Activated naive CD4-positive, alpha-beta T cell treated with anti-CD3 and anti-CD28 coated beads for 36 hours (primary cell): ENCODE measurements at regions of chr11 and their contacts with region 1.

Region 1: GRCh38 chr11:4187055-4187988 is 92.7 kb downstream of the RRM1 start:
- DNase-seq: peak; percentile 89
- H3K4me3 Mint-ChIP-seq: peak overlapping the region; percentile 73
- H3K27ac Mint-ChIP-seq: no peak overlapping the region
- H3K4me1 Mint-ChIP-seq: peaks cover 2% of the 10 kb centered on the region
- H3K27me3 Mint-ChIP-seq: peaks cover 9% of the 10 kb centered on the region

Region 2: DNA sequence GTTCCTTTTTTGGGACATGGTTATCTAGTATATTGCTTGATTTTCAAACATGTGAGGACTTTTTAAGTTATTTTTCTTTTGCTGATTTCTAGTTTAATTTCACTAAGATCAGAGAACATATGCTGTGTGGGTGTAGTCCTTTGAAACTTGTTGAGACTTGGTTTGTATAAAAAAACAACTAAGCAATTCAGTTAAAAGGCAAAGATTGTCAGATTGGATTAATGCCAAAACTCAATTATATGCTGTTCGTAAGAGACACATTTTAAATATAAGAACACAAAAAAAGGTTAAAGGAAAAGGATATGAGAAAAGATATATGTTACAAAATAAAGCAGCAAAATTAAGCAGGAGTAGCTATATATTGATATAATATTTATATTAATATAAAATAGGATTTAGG is 110.5 kb before region 1 on chr11:
- CTCF ChIA-PET with region 1: no interaction called
- intact Hi-C with region 1: no loop called
- DNase-seq: no peak
- H3K4me3 Mint-ChIP-seq: no peak overlapping the region
- H3K27ac Mint-ChIP-seq: no peak overlapping the region
- H3K4me1 Mint-ChIP-seq: peaks cover 20% of the 10 kb centered on the region
- H3K27me3 Mint-ChIP-seq: no peaks in the 10 kb centered on the region

Region 3: DNA sequence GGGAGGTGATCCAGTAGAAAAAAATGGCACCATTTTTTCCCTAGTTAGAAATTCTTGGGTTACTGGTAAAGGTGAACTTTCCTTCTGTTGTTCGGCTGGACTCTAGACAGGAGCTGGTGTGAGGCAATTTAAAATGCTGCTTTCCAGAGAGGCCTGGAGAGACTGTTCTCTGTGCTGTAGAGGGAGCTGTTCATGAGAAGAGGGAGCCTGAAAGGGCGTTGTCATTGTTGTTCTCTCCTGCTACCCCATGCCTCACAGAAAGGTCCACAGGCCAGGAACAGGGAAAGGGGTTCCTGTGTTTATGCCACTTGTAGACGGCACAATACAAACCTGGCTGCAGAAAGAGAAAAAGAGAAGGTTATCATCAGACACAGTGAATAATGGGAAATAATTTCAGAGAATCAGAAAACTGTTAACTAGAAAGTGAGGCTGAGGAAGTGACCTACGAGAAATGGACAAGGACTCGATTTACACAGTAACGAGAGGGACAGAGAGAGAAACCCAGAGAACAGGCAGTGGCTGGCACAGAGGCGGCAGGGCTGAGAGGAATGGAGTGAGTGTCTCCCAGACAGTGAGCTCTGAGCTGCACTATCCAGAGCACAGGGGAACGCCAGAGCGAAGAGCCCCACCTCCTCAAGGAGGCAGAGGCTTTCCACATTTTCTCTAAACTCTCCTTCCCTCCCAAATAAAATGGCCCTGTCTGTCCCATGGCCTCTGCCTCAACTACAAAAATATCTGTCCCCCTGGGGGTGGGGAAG is 16.5 kb after region 1 on chr11:
- CTCF ChIA-PET with region 1: interaction called, 14 read pairs
- intact Hi-C with region 1: no loop called
- DNase-seq: no peak
- H3K4me3 Mint-ChIP-seq: no peak overlapping the region
- H3K27ac Mint-ChIP-seq: no peak overlapping the region
- H3K4me1 Mint-ChIP-seq: no peaks in the 10 kb centered on the region
- H3K27me3 Mint-ChIP-seq: peaks cover 5% of the 10 kb centered on the region

Region 4: DNA sequence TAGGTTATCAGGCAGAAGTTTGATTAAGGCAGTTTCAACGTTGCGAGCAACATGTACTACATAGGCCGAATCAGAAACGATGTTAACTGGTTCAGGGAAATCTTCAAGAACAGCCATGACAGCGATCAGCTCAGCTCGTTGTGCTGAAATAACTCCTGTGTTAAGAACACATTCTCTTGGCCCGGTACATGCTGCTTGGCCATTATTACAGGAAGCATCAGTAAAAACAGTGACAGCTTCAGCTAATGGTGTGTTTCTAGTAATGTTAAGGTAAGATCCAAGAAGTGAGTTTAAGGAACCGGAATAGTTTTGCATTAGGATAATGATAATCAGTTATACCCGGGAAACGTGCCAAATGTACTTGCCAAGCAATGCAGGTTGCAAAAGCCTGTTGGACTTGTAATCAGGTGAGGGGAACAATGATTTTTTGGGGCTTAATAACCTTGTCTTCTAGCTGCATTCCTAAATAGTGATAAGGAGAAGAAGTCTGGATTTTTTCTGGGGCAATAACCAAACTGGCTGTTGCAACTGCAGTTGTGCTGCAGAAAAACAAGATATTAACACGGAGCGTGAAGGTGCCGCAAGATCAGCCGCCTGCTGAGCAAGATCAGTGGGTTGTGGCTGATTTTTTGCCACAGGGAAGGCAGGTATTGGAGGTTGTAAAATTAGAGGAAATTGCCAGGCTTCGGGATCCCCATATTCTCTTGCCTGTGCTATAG is 309.4 kb after region 1 on chr11:
- CTCF ChIA-PET with region 1: interaction called, 68 read pairs
- intact Hi-C with region 1: loop called (anchors 1 kb)
- DNase-seq: no peak
- H3K4me3 Mint-ChIP-seq: no peak overlapping the region
- H3K27ac Mint-ChIP-seq: no peak overlapping the region
- H3K4me1 Mint-ChIP-seq: peaks cover 3% of the 10 kb centered on the region
- H3K27me3 Mint-ChIP-seq: peaks cover 6% of the 10 kb centered on the region

Region 5: GRCh38 chr11:4607781-4608666 is 420.7 kb after region 1 on chr11 and contains the start of gene TRIM68:
- CTCF ChIA-PET with region 1: interaction called, 3 read pairs
- intact Hi-C with region 1: loop called (anchors 2 kb)
- DNase-seq: peak; percentile 97
- H3K4me3 Mint-ChIP-seq: peak within 1 kb of the TSS; percentile 94
- H3K27ac Mint-ChIP-seq: peak within 1 kb of the TSS; percentile 88
- H3K4me1 Mint-ChIP-seq: peaks cover 45% of the 10 kb centered on the region
- H3K27me3 Mint-ChIP-seq: no peaks in the 10 kb centered on the region
- total RNA-seq, gene TRIM68: 11.3 to 15.4 TPM

Region 6: DNA sequence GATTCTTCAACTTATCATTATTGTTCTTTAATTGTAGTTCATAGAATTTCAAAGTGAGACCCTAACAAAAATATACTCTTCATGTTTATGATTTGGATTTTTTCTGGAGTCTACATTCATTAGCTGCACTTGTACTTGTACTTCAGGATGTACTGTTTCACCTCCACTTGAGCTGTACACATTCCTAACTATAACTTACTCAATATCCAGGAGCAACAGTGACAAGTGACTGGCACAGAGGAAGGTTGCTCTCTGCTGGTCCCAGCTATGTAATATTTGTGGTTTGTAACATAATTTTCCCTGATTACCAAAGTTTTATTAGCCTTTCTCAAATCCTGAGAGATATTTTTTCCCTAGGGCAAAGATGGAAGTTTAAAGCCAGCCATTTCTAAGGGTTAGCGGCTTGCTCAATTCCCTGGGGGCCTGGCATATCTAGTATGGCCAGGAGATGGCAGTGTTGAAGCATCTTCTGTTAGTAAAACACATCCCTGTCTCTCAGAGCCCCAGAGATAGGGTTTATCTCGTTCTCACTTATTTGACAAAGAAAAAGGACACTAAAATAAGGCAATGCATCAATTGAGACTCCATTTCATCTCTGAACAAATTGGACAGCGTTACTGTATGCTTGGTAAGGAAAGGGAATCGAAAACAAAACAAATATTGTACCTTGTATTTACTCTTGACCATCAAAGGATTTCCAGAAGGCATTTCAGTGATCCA is 936.6 kb after region 1 on chr11:
- CTCF ChIA-PET with region 1: no interaction called
- intact Hi-C with region 1: loop called (anchors 5 kb)
- DNase-seq: peak; percentile 74
- H3K4me3 Mint-ChIP-seq: no peak overlapping the region
- H3K27ac Mint-ChIP-seq: no peak overlapping the region
- H3K4me1 Mint-ChIP-seq: no peaks in the 10 kb centered on the region
- H3K27me3 Mint-ChIP-seq: peaks cover 22% of the 10 kb centered on the region

Region 7: GRCh38 chr11:5808500-5809121 is 1621.3 kb after region 1 on chr11 and contains the start of gene OR52N2:
- CTCF ChIA-PET with region 1: no interaction called
- intact Hi-C with region 1: loop called (anchors 1 kb)
- DNase-seq: peak; percentile 86
- H3K4me3 Mint-ChIP-seq: peak within 1 kb of the TSS; percentile 89
- H3K27ac Mint-ChIP-seq: peak within 1 kb of the TSS; percentile 67
- H3K4me1 Mint-ChIP-seq: peaks cover 8% of the 10 kb centered on the region
- H3K27me3 Mint-ChIP-seq: peaks cover 5% of the 10 kb centered on the region
- total RNA-seq, gene OR52N2: not detected